ENCODE measurements at regions of chr10 and their contacts with region 1.

Region 1: GRCh38 chr10:11663763-11664555 is 52.5 kb upstream of the USP6NL start:
- DNase-seq: peak; percentile 39
- ATAC-seq: peak; percentile 64
- H3K4me3 Mint-ChIP-seq: peak overlapping the region; percentile 73
- H3K27ac Mint-ChIP-seq: peak overlapping the region; percentile 96
- H3K4me1 Mint-ChIP-seq: peaks cover 87% of the 10 kb centered on the region
- H3K27me3 Mint-ChIP-seq: no peaks in the 10 kb centered on the region
- CTCF ChIP-seq: no peak

Region 2: GRCh38 chr10:11631890-11632587 is 31.9 kb before region 1 on chr10:
- CTCF ChIA-PET with region 1: interaction called, 4 read pairs
- POLR2A ChIA-PET with region 1: interaction called, 7 read pairs
- intact Hi-C with region 1: loop called (anchors 1 kb)
- DNase-seq: no peak
- ATAC-seq: peak; percentile 97
- H3K4me3 Mint-ChIP-seq: peak overlapping the region; percentile 65
- H3K27ac Mint-ChIP-seq: peak overlapping the region; percentile 95
- H3K4me1 Mint-ChIP-seq: peaks cover 52% of the 10 kb centered on the region
- H3K27me3 Mint-ChIP-seq: no peaks in the 10 kb centered on the region
- CTCF ChIP-seq: no peak

Region 3: GRCh38 chr10:11678074-11678793 is 14.3 kb after region 1 on chr10:
- CTCF ChIA-PET with region 1: interaction called, 4 read pairs
- POLR2A ChIA-PET with region 1: interaction called, 16 read pairs
- intact Hi-C with region 1: loop called (anchors 1 kb)
- DNase-seq: peak; percentile 51
- ATAC-seq: peak; percentile 80
- H3K4me3 Mint-ChIP-seq: peak overlapping the region; percentile 77
- H3K27ac Mint-ChIP-seq: peak overlapping the region; percentile 94
- H3K4me1 Mint-ChIP-seq: peaks cover 94% of the 10 kb centered on the region
- H3K27me3 Mint-ChIP-seq: no peaks in the 10 kb centered on the region
- CTCF ChIP-seq: no peak

Region 4: DNA sequence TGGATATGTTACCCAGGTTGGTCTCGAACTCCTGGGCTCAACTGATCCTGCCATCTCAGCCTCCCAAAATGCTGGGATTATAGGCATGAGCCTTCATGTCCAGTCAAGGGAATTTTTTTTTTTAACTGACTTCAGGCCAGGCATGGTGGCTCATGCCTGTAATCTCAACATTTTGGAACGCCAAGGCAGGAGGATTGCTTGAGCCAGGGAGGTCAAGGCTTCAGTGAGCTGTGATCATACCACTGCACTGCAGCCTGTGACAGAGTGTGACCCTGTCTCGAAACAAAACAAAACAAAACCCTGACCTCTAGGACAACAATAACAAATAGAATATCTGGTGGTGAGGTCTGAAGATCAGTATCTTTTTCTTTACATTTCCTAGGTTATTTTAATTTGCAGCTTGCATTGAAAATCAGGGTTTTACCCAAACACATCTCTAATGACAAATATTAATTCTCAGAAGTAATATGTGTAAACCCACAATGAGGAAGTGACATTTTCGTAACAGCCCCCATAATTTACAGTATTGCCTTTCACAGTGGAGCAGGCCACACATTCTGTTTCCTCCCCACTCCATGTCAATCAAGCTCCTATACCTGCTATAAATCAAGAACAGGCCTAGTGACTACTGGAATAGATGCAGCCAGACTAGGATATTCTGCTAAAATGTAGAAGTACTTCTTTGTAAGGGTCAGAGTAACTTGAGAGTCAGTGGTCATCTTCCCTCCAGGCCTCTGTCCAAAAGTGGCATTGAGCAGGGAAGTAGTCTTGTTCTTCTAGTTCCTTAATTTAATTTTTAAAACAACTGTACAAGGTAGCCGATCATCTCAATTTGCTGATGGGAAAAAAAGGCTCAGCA is 35.0 kb after region 1 on chr10:
- CTCF ChIA-PET with region 1: no interaction called
- POLR2A ChIA-PET with region 1: interaction called, 13 read pairs
- intact Hi-C with region 1: loop called (anchors 5 kb)
- DNase-seq: no peak
- ATAC-seq: peak; percentile 84
- H3K4me3 Mint-ChIP-seq: peak overlapping the region; percentile 44
- H3K27ac Mint-ChIP-seq: peak overlapping the region; percentile 86
- H3K4me1 Mint-ChIP-seq: peaks cover 66% of the 10 kb centered on the region
- H3K27me3 Mint-ChIP-seq: no peaks in the 10 kb centered on the region
- CTCF ChIP-seq: no peak

Region 5: DNA sequence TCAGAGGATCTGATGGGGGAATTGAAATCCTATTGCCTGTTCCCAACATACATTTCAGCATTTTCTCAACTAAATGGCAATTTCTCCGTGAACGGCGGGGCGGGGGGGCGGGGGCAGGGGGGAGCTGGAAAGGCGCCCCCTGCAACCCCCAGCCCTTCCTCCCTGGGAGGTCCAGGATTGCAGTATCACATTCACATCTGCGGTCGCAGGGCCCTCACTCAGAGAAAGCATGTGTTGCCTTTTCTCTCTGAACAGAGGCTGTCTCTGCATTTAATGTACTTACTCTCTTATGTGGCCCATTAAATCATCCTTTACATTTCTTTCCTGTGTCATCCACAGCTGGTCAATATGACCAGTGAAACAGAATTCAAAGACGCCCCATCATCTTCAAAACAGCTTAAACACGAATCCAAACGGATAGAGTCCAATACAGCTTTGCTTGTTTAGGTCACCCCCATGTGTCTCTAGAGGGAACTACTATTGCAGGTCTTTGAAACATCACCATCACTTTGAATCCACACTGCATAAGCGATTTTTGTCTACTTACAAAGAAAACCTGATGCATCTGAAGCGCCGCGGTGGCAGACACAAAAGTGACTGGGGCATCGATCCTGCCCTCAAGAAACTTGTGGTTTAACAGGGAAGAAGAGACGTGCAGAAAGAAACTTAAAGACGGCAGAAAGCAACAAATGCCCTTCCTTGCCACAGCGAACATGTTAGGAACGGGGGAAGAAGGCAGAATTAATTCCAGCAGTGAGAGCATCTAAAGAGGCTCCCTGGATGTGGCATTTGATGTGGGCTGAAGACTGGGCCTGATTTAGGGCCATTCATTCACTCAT is 61.2 kb after region 1 on chr10:
- CTCF ChIA-PET with region 1: interaction called, 3 read pairs
- POLR2A ChIA-PET with region 1: no interaction called
- intact Hi-C with region 1: loop called (anchors 1 kb)
- DNase-seq: no peak
- ATAC-seq: peak; percentile 95
- H3K4me3 Mint-ChIP-seq: no peak overlapping the region
- H3K27ac Mint-ChIP-seq: peak overlapping the region; percentile 79
- H3K4me1 Mint-ChIP-seq: peaks cover 29% of the 10 kb centered on the region
- H3K27me3 Mint-ChIP-seq: no peaks in the 10 kb centered on the region
- CTCF ChIP-seq: peak; percentile 45

Measured in activated B cell treated with CpG ODN at 0.5 μM for 24 hours (primary cell).